BJ (cell line): ENCODE measurements at regions of chr1 and their contacts with region 1.

Region 1: DNA sequence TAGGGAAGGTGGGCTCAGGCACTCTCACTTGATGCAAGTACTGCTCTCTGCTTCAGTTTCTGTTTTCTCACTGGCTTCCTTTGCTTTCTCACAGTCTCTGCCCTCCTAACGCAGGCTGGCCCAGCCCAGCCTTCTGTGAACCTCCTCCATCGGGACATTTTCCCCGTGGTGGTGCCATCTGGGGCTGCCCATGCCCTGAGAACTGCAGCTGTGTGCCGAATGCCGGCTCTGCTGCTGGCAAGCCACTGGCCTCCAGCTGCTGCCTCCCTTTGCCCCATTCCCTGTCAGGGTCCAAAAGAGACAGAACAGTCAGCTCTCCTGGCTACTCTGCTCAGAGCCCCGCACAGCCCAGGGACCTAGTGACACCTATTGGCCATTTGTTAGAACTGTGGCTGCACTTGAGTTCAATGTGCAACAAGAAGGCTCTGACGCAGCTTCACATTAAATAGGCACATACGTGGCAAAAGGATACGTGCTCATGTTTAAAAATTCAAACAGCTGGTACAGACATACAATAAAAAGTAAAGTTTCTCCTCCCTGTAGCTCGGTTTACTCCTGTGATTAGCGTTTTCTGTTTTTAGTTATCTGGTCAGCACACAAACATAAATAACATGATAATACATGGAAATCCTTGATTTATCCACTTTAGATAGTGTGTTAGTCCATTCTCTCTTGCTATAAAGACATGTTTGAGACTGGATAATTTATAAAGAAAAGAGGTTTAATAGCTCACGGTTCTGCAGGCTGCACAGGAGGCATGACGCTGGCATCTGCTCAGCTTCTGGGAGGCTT is 46.6 kb downstream of the FCRL5 start:
- DNase-seq: no peak
- H3K4me3 ChIP-seq: no peak overlapping the region
- H3K27me3 ChIP-seq: no peaks in the 10 kb centered on the region
- CTCF ChIP-seq: peak; percentile 83

Region 2: GRCh38 chr1:157490467-157491165 is 15.1 kb before region 1 on chr1:
- CTCF ChIA-PET with region 1: interaction called, 23 read pairs
- POLR2A ChIA-PET with region 1: no interaction called
- DNase-seq: no peak
- H3K4me3 ChIP-seq: no peak overlapping the region
- H3K27me3 ChIP-seq: no peaks in the 10 kb centered on the region
- CTCF ChIP-seq: peak; percentile 78